ENCODE measurements at regions of chr2 and their contacts with region 1.

Region 1: DNA sequence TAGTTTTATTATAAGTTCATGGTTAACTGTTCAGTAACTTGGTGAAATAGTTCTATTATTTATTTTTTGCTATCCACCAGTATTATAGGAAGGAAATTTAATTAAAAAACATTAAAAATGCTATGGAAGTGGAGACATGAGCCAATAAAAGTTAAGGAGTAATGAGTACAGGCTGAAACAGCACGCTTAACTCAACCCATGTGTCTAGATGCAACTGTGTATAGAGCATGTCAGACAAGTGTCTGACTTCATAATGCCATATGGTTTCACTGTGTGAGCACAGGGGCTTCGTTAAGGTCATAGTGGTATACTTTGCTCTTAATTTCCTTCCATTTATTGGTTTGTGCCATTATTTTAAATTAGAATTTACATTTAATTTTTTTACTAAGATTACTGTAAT is 566.8 kb upstream of the NRP2 start:
- DNase-seq: no peak
- ATAC-seq: no peak
- H3K4me3 ChIP-seq: no peak overlapping the region
- H3K4me3 Mint-ChIP-seq: no peak overlapping the region
- H3K27ac ChIP-seq: no peak overlapping the region
- H3K27ac Mint-ChIP-seq: no peak overlapping the region
- H3K4me1 ChIP-seq: no peaks in the 10 kb centered on the region
- H3K4me1 Mint-ChIP-seq: peaks cover 0 to 7% (median 7%) of the 10 kb centered on the region in 3 donors
- H3K27me3 ChIP-seq: no peaks in the 10 kb centered on the region
- H3K27me3 Mint-ChIP-seq: no peaks in the 10 kb centered on the region

Region 2: DNA sequence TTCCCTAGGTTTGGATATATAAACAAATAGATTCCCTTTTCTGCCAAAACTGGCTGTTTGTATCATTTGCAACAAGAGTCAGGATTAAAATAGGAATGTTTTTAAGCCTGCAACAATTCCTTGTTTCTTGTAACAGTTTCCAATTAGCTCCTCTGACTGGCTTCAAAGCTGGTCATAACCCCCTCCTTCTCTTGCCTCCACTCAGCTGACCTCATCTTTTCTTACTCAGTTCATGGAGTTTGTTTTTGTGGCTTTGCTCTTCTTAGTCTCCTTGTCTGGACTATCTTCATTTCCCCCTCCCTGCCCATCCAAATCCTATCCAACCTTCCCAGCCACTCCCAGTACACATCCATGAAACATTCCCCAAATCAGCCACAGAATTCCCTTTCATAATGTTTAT is 1566.1 kb before region 1 on chr2:
- CTCF ChIA-PET with region 1: no interaction called
- POLR2A ChIA-PET with region 1: interaction called in 1 of 2 experiments, 11 read pairs
- DNase-seq: no peak
- ATAC-seq: no peak
- H3K4me3 ChIP-seq: no peak overlapping the region
- H3K4me3 Mint-ChIP-seq: no peak overlapping the region
- H3K27ac ChIP-seq: no peak overlapping the region
- H3K27ac Mint-ChIP-seq: no peak overlapping the region
- H3K4me1 ChIP-seq: no peaks in the 10 kb centered on the region
- H3K4me1 Mint-ChIP-seq: peaks cover 7 to 9% (median 8%) of the 10 kb centered on the region in 3 donors
- H3K27me3 ChIP-seq: no peaks in the 10 kb centered on the region
- H3K27me3 Mint-ChIP-seq: peaks cover 0 to 3% of the 10 kb centered on the region in 2 donors

Region 3: GRCh38 chr2:204842661-204843485 is 272.6 kb before region 1 on chr2:
- CTCF ChIA-PET with region 1: no interaction called
- POLR2A ChIA-PET with region 1: no interaction called
- DNase-seq: peak in 1 of 35 experiments; percentile 2
- ATAC-seq: peak in 2 of 4 experiments; percentile 49 to 73
- H3K4me3 ChIP-seq: no peak overlapping the region
- H3K4me3 Mint-ChIP-seq: no peak overlapping the region
- H3K27ac ChIP-seq: no peak overlapping the region
- H3K27ac Mint-ChIP-seq: peak overlapping the region in 1 of 2 donors; percentile 27
- H3K4me1 ChIP-seq: no peaks in the 10 kb centered on the region
- H3K4me1 Mint-ChIP-seq: peaks cover 0 to 20% (median 14%) of the 10 kb centered on the region in 3 donors
- H3K27me3 ChIP-seq: no peaks in the 10 kb centered on the region
- H3K27me3 Mint-ChIP-seq: no peaks in the 10 kb centered on the region

Region 4: DNA sequence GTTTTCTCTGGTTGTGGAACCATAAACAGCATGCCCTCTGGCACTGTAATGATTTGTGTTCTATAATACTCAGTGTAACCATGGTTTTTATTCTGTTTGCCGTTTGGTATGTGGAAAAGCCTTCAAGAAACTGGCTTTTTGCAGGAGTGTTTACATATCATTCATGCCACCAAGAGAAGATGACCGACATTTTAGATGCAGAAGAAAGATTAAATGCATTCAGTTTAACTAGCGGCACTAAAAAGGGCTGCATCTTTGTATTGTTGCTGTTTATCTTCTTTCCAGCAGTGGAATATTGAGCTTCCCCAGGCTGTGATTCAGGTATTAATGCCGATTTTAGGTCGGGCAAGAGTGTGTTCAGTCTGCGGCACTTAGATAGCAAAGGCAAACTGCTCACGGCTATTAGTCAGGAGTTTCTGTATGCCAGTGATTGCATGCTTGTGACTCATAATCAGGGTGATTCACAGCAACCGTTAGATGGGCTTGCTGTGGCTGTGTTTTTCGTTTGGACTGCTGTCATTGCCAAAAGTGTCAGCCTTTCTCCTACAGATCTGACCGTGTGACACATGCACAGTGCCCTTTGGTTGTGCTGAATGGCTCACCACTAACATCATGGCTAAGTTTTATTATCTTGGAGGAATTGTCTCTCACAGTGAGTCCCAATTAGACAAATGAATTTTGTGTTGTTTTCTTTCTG is 90.5 kb before region 1 on chr2:
- CTCF ChIA-PET with region 1: no interaction called
- POLR2A ChIA-PET with region 1: interaction called in 1 of 2 experiments, 11 read pairs
- DNase-seq: no peak
- ATAC-seq: peak in 3 of 4 experiments; percentile 52 to 82 (median 58)
- H3K4me3 ChIP-seq: no peak overlapping the region
- H3K4me3 Mint-ChIP-seq: peak overlapping the region in 1 of 3 donors; percentile 55
- H3K27ac ChIP-seq: no peak overlapping the region
- H3K27ac Mint-ChIP-seq: peak overlapping the region in 1 of 2 donors; percentile 19
- H3K4me1 ChIP-seq: peaks cover 0 to 16% of the 10 kb centered on the region in 2 experiments
- H3K4me1 Mint-ChIP-seq: peaks cover 21 to 32% (median 26%) of the 10 kb centered on the region in 3 donors
- H3K27me3 ChIP-seq: no peaks in the 10 kb centered on the region
- H3K27me3 Mint-ChIP-seq: no peaks in the 10 kb centered on the region

Region 5: GRCh38 chr2:205091411-205091810 is 24.1 kb before region 1 on chr2:
- CTCF ChIA-PET with region 1: no interaction called
- POLR2A ChIA-PET with region 1: no interaction called
- DNase-seq: no peak
- ATAC-seq: no peak
- H3K4me3 ChIP-seq: no peak overlapping the region
- H3K4me3 Mint-ChIP-seq: no peak overlapping the region
- H3K27ac ChIP-seq: no peak overlapping the region
- H3K27ac Mint-ChIP-seq: no peak overlapping the region
- H3K4me1 ChIP-seq: peaks cover 3 to 13% of the 10 kb centered on the region in 2 experiments
- H3K4me1 Mint-ChIP-seq: peaks cover 21 to 34% (median 32%) of the 10 kb centered on the region in 3 donors
- H3K27me3 ChIP-seq: no peaks in the 10 kb centered on the region
- H3K27me3 Mint-ChIP-seq: no peaks in the 10 kb centered on the region

Region 6: DNA sequence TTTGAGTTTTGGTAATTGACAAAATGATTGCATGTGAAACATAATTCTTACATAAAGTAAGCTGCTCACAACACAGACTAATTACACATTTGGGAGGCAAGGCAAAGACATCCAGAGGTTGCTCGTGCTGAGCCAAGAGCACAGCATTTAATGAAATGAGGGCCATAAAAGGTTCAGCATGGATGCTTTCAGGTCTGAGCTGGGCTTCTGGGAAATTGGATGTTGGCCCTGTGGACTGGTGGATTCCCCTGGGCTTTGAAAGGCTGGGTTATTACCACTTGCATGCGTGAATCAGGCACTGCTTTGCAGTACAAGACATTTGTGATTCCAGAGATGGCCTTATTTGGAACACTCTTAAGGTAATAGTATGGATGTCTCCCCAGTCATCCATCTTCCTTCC is 33.2 kb after region 1 on chr2:
- CTCF ChIA-PET with region 1: no interaction called
- POLR2A ChIA-PET with region 1: no interaction called
- DNase-seq: no peak
- ATAC-seq: no peak
- H3K4me3 ChIP-seq: no peak overlapping the region
- H3K4me3 Mint-ChIP-seq: no peak overlapping the region
- H3K27ac ChIP-seq: no peak overlapping the region
- H3K27ac Mint-ChIP-seq: no peak overlapping the region
- H3K4me1 ChIP-seq: no peaks in the 10 kb centered on the region
- H3K4me1 Mint-ChIP-seq: no peaks in the 10 kb centered on the region
- H3K27me3 ChIP-seq: no peaks in the 10 kb centered on the region
- H3K27me3 Mint-ChIP-seq: no peaks in the 10 kb centered on the region

Measured in T-cell (primary cell).